ENCODE measurements at regions of chr1 and their contacts with region 1.

Region 1: DNA sequence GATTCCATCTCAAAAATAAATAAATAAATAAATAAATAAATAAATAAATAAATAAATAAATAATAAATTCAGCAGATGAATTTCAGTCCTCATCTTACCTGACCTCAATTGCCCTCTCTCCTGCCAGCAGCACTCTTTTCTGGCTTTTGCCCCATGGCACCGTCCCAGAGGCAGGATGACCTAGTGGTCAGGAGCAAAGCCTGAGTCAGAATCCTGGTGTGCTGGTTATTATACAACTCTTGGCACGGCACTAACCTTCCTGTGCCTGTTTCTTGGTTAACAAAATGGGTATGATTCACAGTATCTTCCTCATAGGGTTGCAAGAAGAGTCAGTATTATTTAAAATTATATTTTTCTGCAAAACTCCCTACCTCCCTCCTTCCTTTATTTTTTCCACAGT is 43.0 kb downstream of the NKAIN1 start:
- DNase-seq: no peak
- ATAC-seq: no peak
- H3K4me3 ChIP-seq: no peak overlapping the region
- H3K27ac ChIP-seq: no peak overlapping the region
- H3K4me1 ChIP-seq: no peaks in the 10 kb centered on the region
- H3K27me3 ChIP-seq: no peaks in the 10 kb centered on the region
- CTCF ChIP-seq: no peak

Region 2: GRCh38 chr1:31335007-31335406 is 138.3 kb after region 1 on chr1:
- intact Hi-C with region 1: loop called in 1 of 3 experiments (anchors 10 kb)
- DNase-seq: no peak
- ATAC-seq: peak in 3 of 4 donors; percentile 49 to 57 (median 53)
- H3K4me3 ChIP-seq: no peak overlapping the region
- H3K27ac ChIP-seq: no peak overlapping the region
- H3K4me1 ChIP-seq: no peaks in the 10 kb centered on the region
- H3K27me3 ChIP-seq: no peaks in the 10 kb centered on the region
- CTCF ChIP-seq: peak in 2 of 4 donors; percentile 9 to 24